Activated CD8-positive, alpha-beta T cell treated with anti-CD3 and anti-CD28 coated beads for 36 hours (primary cell): ENCODE measurements at regions of chr11 and their contacts with region 1.

Region 1: GRCh38 chr11:73184953-73185671 is 33.0 kb upstream of the P2RY2 start:
- DNase-seq: peak; percentile 74
- ATAC-seq: peak; percentile 97
- H3K4me3 Mint-ChIP-seq: peak overlapping the region; percentile 11
- H3K27ac Mint-ChIP-seq: no peak overlapping the region
- H3K4me1 Mint-ChIP-seq: peaks cover 3% of the 10 kb centered on the region
- H3K27me3 Mint-ChIP-seq: peaks cover 7% of the 10 kb centered on the region
- CTCF ChIP-seq: peak; percentile 96

Region 2: GRCh38 chr11:72831513-72832300 is 353.4 kb before region 1 on chr11:
- CTCF ChIA-PET with region 1: interaction called, 7 read pairs
- POLR2A ChIA-PET with region 1: no interaction called
- intact Hi-C with region 1: loop called (anchors 10 kb)
- DNase-seq: peak; percentile 48
- ATAC-seq: peak; percentile 60
- H3K4me3 Mint-ChIP-seq: no peak overlapping the region
- H3K27ac Mint-ChIP-seq: peak overlapping the region; percentile 33
- H3K4me1 Mint-ChIP-seq: peaks cover 14% of the 10 kb centered on the region
- H3K27me3 Mint-ChIP-seq: no peaks in the 10 kb centered on the region
- CTCF ChIP-seq: peak; percentile 55

Region 3: DNA sequence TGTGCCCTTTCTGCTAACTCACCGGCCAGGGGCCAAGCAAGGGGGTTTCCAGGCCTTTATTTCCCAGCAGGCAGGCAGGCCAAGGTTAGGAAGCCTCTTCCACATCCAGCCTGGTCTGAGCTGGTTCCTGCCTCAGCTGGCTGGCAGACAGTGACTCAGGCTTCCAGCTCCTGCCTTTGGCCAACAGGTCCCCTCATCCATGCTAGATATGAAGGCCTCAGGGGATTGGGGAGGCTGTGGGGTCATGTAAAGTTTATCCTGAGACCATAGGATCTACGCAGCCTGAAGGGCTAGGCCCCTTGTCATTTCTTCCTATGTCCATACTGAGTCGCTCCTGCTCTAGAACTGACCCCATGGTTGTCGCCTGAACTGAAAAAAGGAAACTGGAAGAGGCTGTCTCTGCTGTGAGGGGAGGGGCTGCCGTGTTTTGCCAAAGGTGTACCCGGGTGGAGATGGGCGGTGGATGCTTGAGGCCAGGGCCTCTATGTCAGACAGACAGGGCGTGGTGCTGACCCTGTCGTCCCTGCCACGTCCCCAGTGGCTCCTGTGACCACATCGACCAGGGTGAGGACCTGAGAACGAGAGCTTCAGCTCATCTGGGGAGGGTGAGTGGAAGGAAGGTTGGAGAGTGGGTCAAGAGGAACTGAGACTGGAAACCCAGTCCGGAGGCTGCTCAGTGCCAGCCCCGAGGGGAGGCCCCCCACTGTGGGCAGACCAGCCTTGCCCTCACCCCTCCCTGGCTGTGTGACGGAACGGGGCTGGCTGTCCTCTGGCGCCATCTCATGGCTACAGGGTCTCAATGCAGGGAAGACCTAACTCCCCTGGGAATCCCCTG is 104.0 kb after region 1 on chr11:
- CTCF ChIA-PET with region 1: interaction called, 39 read pairs
- POLR2A ChIA-PET with region 1: no interaction called
- intact Hi-C with region 1: loop called (anchors 10 kb)
- DNase-seq: peak; percentile 70
- ATAC-seq: peak; percentile 92
- H3K4me3 Mint-ChIP-seq: no peak overlapping the region
- H3K27ac Mint-ChIP-seq: no peak overlapping the region
- H3K4me1 Mint-ChIP-seq: peaks cover 12% of the 10 kb centered on the region
- H3K27me3 Mint-ChIP-seq: no peaks in the 10 kb centered on the region
- CTCF ChIP-seq: peak; percentile 93

Region 4: GRCh38 chr11:73325036-73325981 is 140.2 kb after region 1 on chr11:
- CTCF ChIA-PET with region 1: no interaction called
- POLR2A ChIA-PET with region 1: no interaction called
- intact Hi-C with region 1: no loop called
- DNase-seq: no peak
- ATAC-seq: no peak
- H3K4me3 Mint-ChIP-seq: no peak overlapping the region
- H3K27ac Mint-ChIP-seq: no peak overlapping the region
- H3K4me1 Mint-ChIP-seq: peaks cover 12% of the 10 kb centered on the region
- H3K27me3 Mint-ChIP-seq: no peaks in the 10 kb centered on the region
- CTCF ChIP-seq: no peak